PC-3 (cell line): ENCODE measurements at regions of chr1 and their contacts with region 1.

Region 1: DNA sequence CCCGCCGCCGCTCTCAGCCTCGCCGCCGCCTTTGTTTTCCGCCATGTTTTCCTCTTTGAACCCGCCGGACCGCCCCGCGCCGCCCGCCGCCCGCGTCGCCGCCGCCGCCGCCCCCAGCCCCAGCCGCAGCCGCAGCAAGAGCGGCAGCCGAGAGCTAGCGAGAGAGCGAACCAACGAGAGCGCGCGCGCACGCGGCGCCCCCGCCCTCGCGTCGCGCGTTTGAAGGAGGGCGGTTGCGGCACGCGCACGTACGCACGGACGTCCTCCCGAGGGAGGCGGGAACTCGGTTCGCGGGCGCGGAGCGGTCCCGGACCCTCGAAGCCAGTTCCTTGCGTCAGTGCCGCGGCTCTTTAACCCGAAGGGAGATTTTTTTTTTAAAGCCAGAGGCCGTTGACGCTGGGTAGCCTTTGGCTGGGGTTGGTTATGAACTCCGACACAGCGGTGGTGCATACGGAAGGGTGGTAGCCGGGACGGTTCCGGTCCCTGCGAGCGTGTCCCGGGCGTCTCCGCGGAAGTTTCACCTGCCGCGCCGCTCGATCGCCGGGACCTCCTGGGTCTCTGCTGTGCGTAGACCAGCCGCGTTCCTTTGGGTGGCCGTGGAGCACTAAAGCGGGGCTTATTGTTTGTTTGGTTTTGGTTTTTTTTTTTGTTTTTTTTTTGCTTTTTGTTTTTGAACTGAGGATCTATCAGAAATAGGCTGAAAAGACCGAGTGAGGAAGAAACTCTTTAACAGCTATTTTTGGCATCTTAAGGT is at the start of gene TRIM33:
- DNase-seq: peak; percentile 97
- ATAC-seq: peak; percentile 72
- H3K4me3 ChIP-seq: peak within 1 kb of the TSS; percentile 90
- H3K27ac ChIP-seq: peak within 1 kb of the TSS; percentile 62
- H3K4me1 ChIP-seq: peaks cover 21% of the 10 kb centered on the region
- H3K27me3 ChIP-seq: no peaks in the 10 kb centered on the region
- CTCF ChIP-seq: no peak
- total RNA-seq, gene TRIM33: 28.8 and 36.7 TPM in 2 replicates

Region 2: GRCh38 chr1:114418247-114418646 is 93.0 kb before region 1 on chr1:
- CTCF ChIA-PET with region 1: no interaction called
- POLR2A ChIA-PET with region 1: no interaction called
- intact Hi-C with region 1: loop called (anchors 10 kb)
- DNase-seq: no peak
- ATAC-seq: no peak
- H3K4me3 ChIP-seq: no peak overlapping the region
- H3K27ac ChIP-seq: no peak overlapping the region
- H3K4me1 ChIP-seq: 0 out of 2 replicates have a peak, but pooled peaks cover under 1% of the 10 kb centered on the region
- H3K27me3 ChIP-seq: no peaks in the 10 kb centered on the region
- CTCF ChIP-seq: no peak

Region 3: DNA sequence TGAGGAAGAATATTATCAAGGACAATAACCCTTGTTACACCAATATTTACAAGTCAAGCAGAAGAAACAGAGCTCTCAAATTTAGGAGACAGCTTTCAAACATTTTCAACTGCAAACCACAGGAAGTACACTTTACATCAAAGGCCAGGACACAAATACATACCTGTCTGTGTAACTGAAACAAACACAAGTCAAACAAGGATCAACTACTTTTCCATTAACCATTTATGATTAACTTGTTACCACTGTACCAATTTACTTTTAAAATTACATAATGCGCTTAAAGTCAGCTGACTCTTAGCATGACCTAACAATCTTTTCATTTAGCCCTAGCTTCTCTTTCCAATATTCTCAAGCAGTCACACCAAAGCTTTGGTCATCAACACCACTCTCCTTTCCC is 43.7 kb before region 1 on chr1:
- CTCF ChIA-PET with region 1: no interaction called
- POLR2A ChIA-PET with region 1: no interaction called
- intact Hi-C with region 1: loop called (anchors 5 kb)
- DNase-seq: no peak
- ATAC-seq: no peak
- H3K4me3 ChIP-seq: no peak overlapping the region
- H3K27ac ChIP-seq: no peak overlapping the region
- H3K4me1 ChIP-seq: peaks cover 22% of the 10 kb centered on the region
- H3K27me3 ChIP-seq: no peaks in the 10 kb centered on the region
- CTCF ChIP-seq: no peak